SK-N-SH (cell line): ENCODE measurements at regions of chr10 and their contacts with region 1.

Region 1: GRCh38 chr10:124741281-124741921 is 2.8 kb downstream of the FAM53B start:
- DNase-seq: peak; percentile 84
- H3K4me3 ChIP-seq: no peak overlapping the region
- H3K27ac ChIP-seq: no peak overlapping the region; a peak in 1 of 4 replicates
- H3K4me1 ChIP-seq: peaks cover 12 to 52% of the 10 kb centered on the region in 2 experiments; a peak in 2 of 4 replicates
- H3K27me3 ChIP-seq: no peaks in the 10 kb centered on the region
- CTCF ChIP-seq: peak; percentile 84
- EP300 ChIP-seq: no peak
- RAD21 ChIP-seq: peak; percentile 83

Region 2: GRCh38 chr10:124539935-124540641 is 201.3 kb before region 1 on chr10:
- CTCF ChIA-PET with region 1: interaction called, 192 read pairs
- POLR2A ChIA-PET with region 1: interaction called, 5 read pairs
- DNase-seq: peak; percentile 96
- H3K4me3 ChIP-seq: no peak overlapping the region
- H3K27ac ChIP-seq: no peak overlapping the region
- H3K4me1 ChIP-seq: peaks cover 0 to 6% of the 10 kb centered on the region in 2 experiments; a peak in 1 of 4 replicates
- H3K27me3 ChIP-seq: no peaks in the 10 kb centered on the region
- CTCF ChIP-seq: peak; percentile 58
- EP300 ChIP-seq: no peak
- RAD21 ChIP-seq: peak; percentile 90

Region 3: DNA sequence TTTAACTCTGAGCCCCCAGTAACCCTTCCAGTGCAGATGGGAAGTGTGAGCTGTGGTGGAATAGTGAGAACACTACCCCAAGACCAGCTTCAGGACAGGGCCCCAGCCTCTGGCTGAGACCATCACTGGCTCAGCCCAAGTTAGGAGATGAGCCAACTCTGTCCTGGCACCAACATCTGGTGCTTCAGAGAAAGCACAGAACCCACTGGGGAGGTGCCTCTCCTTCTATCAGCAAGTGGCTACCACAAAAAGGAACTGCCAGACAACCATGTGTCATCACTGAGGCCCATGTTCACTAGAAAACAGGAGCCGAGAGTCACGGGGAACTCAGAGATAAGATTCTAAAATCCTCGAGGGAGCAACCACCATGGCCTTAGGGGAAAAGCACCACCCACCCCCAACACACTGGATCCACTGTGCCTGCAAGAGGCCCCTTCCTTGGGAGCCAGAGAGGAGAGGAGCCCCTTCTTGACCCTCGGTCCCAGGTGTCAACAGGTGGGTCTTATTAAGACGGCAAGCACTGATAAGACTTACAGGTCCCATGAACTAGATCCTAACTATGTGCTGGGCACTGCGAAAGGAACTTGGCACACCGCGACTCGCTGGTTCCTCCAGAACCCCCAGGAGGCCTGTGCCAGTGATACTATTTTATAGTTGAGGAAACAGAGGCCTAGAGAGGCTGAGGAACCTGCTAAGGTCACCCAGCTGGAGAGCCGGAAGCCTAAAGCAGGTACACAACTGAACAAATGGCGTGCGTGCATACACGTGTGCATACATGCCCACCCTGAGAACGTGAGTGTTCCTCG is 99.9 kb before region 1 on chr10:
- CTCF ChIA-PET with region 1: interaction called, 14 read pairs
- POLR2A ChIA-PET with region 1: no interaction called
- DNase-seq: peak; percentile 65
- H3K4me3 ChIP-seq: no peak overlapping the region
- H3K27ac ChIP-seq: peak overlapping the region in 1 of 2 experiments; percentile 72; a peak in 1 of 4 replicates
- H3K4me1 ChIP-seq: peaks cover 3 to 50% of the 10 kb centered on the region in 2 experiments; a peak in 2 of 4 replicates
- H3K27me3 ChIP-seq: no peaks in the 10 kb centered on the region
- CTCF ChIP-seq: no peak
- EP300 ChIP-seq: no peak
- RAD21 ChIP-seq: no peak

Region 4: GRCh38 chr10:124701435-124701834 is 40.0 kb before region 1 on chr10:
- CTCF ChIA-PET with region 1: interaction called, 10 read pairs
- POLR2A ChIA-PET with region 1: no interaction called
- DNase-seq: no peak
- H3K4me3 ChIP-seq: no peak overlapping the region
- H3K27ac ChIP-seq: peak overlapping the region in 1 of 2 experiments; percentile 58; a peak in 1 of 4 replicates
- H3K4me1 ChIP-seq: peaks cover 0 to 67% of the 10 kb centered on the region in 2 experiments; a peak in 1 of 4 replicates
- H3K27me3 ChIP-seq: no peaks in the 10 kb centered on the region
- CTCF ChIP-seq: no peak
- EP300 ChIP-seq: no peak
- RAD21 ChIP-seq: no peak

Region 5: GRCh38 chr10:124724279-124725027 is 16.9 kb before region 1 on chr10:
- CTCF ChIA-PET with region 1: interaction called, 33 read pairs
- POLR2A ChIA-PET with region 1: no interaction called
- DNase-seq: no peak
- H3K4me3 ChIP-seq: no peak overlapping the region
- H3K27ac ChIP-seq: no peak overlapping the region
- H3K4me1 ChIP-seq: peaks cover 0 to 21% of the 10 kb centered on the region in 2 experiments; a peak in 1 of 4 replicates
- H3K27me3 ChIP-seq: no peaks in the 10 kb centered on the region
- CTCF ChIP-seq: no peak
- EP300 ChIP-seq: no peak
- RAD21 ChIP-seq: no peak